Naive thymus-derived CD4-positive, alpha-beta T cell (primary cell): ENCODE measurements at regions of chr7 and their contacts with region 1.

Region 1: DNA sequence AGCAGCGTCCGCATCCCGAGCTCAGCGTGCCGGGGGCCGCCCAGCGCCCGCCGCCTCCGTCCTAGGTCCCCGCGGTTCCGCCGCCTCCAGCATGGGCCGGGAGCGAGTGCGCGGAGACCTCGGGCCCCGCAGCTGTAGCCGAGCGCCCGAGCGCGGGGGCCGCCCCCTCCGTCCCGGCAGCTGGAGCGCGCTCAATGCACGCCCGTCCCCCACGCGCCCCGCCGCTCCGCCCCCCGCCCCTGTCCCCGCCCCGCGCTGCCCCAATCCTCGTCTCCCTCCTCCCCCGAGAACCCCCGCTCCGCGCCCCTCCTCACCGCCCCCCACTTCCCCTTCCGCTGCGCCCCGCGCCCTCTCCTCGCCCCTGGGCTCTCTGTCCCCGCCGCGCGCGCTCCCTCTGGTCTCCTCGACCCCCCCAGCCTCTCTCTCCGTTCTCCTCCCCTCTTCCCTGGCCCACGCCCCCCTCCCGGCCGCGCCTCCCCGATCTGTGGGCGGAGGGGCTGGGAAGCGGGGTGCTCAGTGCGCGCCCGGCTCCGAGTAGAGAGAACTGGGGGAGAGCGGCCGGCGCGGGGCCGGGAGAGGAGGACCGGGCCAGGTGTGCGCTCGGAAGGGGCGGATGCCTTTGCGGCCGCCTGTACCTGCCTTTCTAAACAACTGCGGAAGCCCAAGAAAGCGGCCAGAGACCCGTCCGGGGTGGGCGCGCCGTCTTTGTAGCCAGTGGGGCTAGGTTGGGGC is at the start of gene VIPR2:
- DNase-seq: peak in 5 of 9 donors; percentile 9 to 48 (median 11)
- ATAC-seq: peak; percentile 59
- H3K4me3 ChIP-seq: peak within 1 kb of the TSS; percentile 43
- H3K4me3 Mint-ChIP-seq: peak within 1 kb of the TSS; percentile 32 to 83 (median 71)
- H3K27ac ChIP-seq: no peak within 1 kb of the TSS
- H3K27ac Mint-ChIP-seq: no peak within 1 kb of the TSS
- H3K4me1 ChIP-seq: peaks cover 0 to 8% of the 10 kb centered on the region in 2 donors
- H3K4me1 Mint-ChIP-seq: peaks cover 0 to 14% (median 6%) of the 10 kb centered on the region in 7 donors
- H3K27me3 ChIP-seq: peaks cover 5 to 11% of the 10 kb centered on the region in 2 donors
- H3K27me3 Mint-ChIP-seq: peaks cover 22 to 33% (median 32%) of the 10 kb centered on the region in 5 donors
- total RNA-seq, gene VIPR2: 0.27 to 1.3 (median 0.98) TPM in 3 of 5 experiments, not detected in the others

Region 2: DNA sequence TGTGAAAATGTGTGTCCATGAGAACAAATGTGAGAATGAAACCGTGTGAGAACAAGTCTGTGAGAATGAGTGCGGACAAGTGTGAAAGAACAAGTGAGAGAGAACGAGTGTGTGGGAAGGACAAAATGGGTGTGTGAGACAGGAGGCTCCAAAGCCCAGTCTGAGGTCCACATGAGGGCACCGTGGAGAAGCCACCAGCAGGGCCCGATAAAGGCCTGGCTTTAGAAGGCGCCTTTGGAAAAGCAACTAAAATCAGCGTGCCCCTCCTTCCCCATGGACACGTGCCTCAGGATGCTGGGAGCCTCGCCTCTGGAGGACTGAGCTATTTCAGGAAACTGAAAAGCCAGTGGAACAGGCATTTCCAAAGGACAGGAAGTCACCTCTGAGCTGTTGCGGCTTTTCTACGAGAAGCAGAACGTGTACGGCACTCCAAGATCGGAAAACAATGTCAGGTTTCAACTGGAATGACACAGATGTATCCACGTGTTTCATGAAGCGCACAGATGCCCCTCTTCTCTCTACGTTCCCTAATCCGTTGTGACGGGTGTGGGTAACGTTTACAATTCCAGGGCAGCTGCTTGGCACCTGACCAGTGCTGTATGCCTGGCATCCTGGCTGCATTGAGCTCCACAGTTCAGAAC is 362.0 kb before region 1 on chr7:
- CTCF ChIA-PET with region 1: no interaction called
- POLR2A ChIA-PET with region 1: no interaction called
- intact Hi-C with region 1: no loop called
- DNase-seq: no peak
- ATAC-seq: peak; percentile 49
- H3K4me3 ChIP-seq: no peak overlapping the region
- H3K4me3 Mint-ChIP-seq: no peak overlapping the region
- H3K27ac ChIP-seq: peak overlapping the region; percentile 34
- H3K27ac Mint-ChIP-seq: no peak overlapping the region
- H3K4me1 ChIP-seq: peaks cover 7 to 41% of the 10 kb centered on the region in 2 donors
- H3K4me1 Mint-ChIP-seq: peaks cover 4 to 14% (median 8%) of the 10 kb centered on the region in 7 donors
- H3K27me3 ChIP-seq: no peaks in the 10 kb centered on the region
- H3K27me3 Mint-ChIP-seq: no peaks in the 10 kb centered on the region

Region 3: DNA sequence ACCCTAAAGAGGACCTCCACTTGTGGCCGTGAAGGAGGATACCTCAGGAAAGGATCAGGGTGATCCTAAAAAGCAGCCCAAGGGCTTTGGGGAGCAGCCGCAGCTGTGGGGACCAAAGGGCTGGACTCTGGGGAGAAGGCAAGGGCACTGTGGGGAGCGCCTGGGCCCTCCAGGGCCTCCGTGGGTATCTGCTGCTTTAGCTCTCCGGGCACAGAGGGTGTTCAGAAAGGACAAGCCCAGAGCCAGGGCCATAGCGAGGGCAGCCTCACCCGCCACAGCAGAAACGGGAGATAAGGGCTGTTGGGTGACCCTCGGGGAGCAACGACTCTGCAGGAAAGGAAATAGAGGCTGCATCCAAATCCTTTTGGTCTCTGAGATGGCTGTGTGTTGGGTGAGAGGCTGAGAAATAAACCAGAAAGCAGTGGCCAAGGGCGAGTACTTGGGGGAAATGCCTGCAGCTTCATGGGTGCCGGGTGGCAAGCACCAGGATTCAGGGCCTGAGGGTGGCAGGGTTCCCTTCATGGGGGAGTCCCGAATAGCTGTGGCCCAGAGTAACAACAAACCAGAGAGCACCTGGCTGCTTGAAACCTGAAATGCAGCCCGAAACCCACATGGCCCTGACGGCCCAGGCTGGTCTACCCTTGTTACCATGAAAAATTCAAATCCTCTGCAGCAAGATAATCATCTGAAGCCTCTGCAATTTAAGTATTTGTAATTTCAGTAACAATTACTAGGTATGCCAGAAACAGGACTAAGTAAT is 95.5 kb before region 1 on chr7:
- CTCF ChIA-PET with region 1: no interaction called
- POLR2A ChIA-PET with region 1: no interaction called
- intact Hi-C with region 1: loop called in 1 of 2 experiments (anchors 5 kb)
- DNase-seq: peak in 1 of 9 donors; percentile 15
- ATAC-seq: no peak
- H3K4me3 ChIP-seq: no peak overlapping the region
- H3K4me3 Mint-ChIP-seq: no peak overlapping the region
- H3K27ac ChIP-seq: no peak overlapping the region
- H3K27ac Mint-ChIP-seq: peak overlapping the region in 1 of 9 donors; percentile 3
- H3K4me1 ChIP-seq: no peaks in the 10 kb centered on the region
- H3K4me1 Mint-ChIP-seq: peaks cover 5 to 35% (median 10%) of the 10 kb centered on the region in 7 donors
- H3K27me3 ChIP-seq: no peaks in the 10 kb centered on the region
- H3K27me3 Mint-ChIP-seq: peaks cover 0 to 12% (median 4%) of the 10 kb centered on the region in 5 donors

Region 4: DNA sequence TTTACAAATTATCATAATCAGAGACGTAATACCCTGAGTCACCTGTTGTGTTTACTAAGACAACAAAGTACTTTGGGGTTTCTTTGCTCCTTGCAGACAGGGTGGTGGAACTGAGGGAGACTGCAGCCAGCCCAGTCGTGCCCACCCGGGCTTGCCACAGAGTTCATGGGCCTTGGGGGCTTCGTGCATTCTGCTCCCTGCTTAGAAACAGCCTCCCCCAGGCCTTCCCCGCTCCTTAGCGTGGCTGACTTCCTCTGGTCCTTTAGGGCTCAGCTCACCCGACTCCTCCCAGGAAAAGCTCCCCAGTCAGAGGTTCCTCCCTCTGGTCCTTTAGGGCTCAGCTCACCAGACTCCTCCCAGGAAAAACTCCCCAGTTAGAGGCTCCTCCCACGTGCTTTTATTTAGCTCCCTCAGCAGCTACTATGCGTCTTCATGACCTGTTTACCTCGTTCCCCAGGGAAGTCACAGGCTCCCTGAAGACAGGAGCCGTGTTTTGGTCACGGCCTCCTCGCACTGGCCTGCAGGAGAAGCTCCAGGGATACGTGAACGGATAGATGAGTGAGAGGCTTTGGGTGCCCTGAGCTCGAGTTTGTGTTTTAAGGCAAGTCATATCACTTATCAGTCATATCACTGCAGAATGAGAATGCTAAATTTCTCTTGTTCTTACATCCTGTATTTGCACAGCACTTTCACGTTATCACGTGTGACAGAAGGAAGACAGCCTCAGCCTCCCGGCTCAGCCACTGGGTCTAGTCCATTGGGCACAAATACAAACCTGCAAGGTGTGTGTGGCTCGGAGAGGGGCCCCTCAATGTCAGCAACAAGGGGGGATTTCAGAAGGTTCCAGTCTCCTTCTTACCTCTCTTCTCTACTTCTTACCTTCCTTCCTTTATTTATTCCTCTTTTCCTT is 52.4 kb after region 1 on chr7:
- CTCF ChIA-PET with region 1: no interaction called
- POLR2A ChIA-PET with region 1: no interaction called
- intact Hi-C with region 1: loop called in 1 of 2 experiments (anchors 5 kb)
- DNase-seq: peak in 7 of 9 donors; percentile 4 to 52 (median 38)
- ATAC-seq: peak; percentile 68
- H3K4me3 ChIP-seq: peak overlapping the region; percentile 31
- H3K4me3 Mint-ChIP-seq: peak overlapping the region; percentile 61 to 93 (median 85)
- H3K27ac ChIP-seq: peak overlapping the region; percentile 45
- H3K27ac Mint-ChIP-seq: peak overlapping the region; percentile 82 to 98 (median 93)
- H3K4me1 ChIP-seq: peaks cover 37 to 53% of the 10 kb centered on the region in 2 donors
- H3K4me1 Mint-ChIP-seq: peaks cover 24 to 54% (median 42%) of the 10 kb centered on the region in 7 donors
- H3K27me3 ChIP-seq: no peaks in the 10 kb centered on the region
- H3K27me3 Mint-ChIP-seq: no peaks in the 10 kb centered on the region